Activated CD4-positive, alpha-beta T cell treated with anti-CD3 and anti-CD28 coated beads for 36 hours (primary cell): ENCODE measurements at regions of chr1 and their contacts with region 1.

Region 1: DNA sequence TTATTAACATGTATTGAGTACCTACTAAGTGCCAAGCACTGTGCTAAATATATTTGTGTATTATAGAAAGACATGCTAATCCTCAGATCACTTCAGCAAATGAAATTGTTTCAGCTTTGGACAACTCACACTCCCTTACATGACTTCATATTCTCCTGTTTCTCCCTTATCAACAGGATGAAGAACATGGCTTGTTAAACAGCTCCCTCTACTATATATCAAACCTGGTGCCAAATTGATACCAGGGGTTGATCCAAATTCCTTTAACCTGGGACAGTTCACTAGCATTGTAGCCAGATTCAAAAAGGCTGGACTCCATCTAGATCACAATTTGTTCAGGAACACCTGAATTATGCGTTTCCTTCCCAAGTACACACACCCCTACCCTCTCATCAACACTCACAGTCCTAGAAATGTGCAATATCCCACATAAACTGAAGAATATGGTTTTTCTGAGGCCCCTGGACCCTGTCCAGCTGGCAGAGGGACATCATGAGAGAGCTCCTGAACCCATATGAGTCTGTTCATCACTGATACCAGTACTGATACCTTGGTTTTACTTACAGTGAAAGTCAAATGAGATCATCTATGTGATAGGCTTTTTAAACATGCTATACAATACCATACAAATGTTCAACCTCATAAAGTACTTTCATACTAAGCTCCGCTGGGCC is 47.0 kb upstream of the PALMD start:
- DNase-seq: no peak
- ATAC-seq: no peak
- H3K4me3 Mint-ChIP-seq: no peak overlapping the region
- H3K27ac Mint-ChIP-seq: no peak overlapping the region
- H3K4me1 Mint-ChIP-seq: peaks cover 2% of the 10 kb centered on the region
- H3K27me3 Mint-ChIP-seq: peaks cover 3% of the 10 kb centered on the region

Region 2: GRCh38 chr1:98355656-98356383 is 1243.1 kb before region 1 on chr1:
- CTCF ChIA-PET with region 1: no interaction called
- POLR2A ChIA-PET with region 1: interaction called, 11 read pairs
- intact Hi-C with region 1: no loop called
- DNase-seq: no peak
- ATAC-seq: no peak
- H3K4me3 Mint-ChIP-seq: no peak overlapping the region
- H3K27ac Mint-ChIP-seq: no peak overlapping the region
- H3K4me1 Mint-ChIP-seq: peaks cover 5% of the 10 kb centered on the region
- H3K27me3 Mint-ChIP-seq: no peaks in the 10 kb centered on the region

Region 3: GRCh38 chr1:99645699-99646531 is 47.0 kb after region 1 on chr1 and contains the start of gene PALMD:
- CTCF ChIA-PET with region 1: no interaction called
- POLR2A ChIA-PET with region 1: no interaction called
- intact Hi-C with region 1: no loop called
- DNase-seq: no peak
- ATAC-seq: no peak
- H3K4me3 Mint-ChIP-seq: no peak within 1 kb of the TSS
- H3K27ac Mint-ChIP-seq: no peak within 1 kb of the TSS
- H3K4me1 Mint-ChIP-seq: no peaks in the 10 kb centered on the region
- H3K27me3 Mint-ChIP-seq: peaks cover 15% of the 10 kb centered on the region
- total RNA-seq, gene PALMD: not detected